GM10248 (cell line): ENCODE measurements at regions of chr6 and their contacts with region 1.

Region 1: GRCh38 chr6:19931540-19931939 is 94.4 kb downstream of the ID4 start:
- DNase-seq: no peak
- CTCF ChIP-seq: no peak

Region 2: DNA sequence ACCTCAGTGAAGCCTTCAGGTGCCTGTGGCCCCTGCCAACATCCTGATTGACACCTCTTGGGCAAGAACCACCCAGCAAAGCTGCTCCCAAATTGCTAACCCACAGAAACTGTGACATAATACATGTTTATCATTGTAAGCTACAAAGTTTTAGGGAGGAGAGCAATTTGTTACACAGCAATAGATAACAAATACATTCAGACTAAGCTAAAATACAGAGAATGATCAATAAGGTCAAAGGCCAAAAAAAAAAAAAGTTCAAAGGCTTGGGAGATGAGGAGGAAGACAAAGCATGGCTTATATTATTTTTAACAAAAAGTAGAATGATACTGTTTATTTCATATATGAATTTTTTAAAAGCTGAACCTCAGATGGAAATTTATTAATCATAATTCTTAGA is 11.5 kb after region 1 on chr6:
- CTCF ChIA-PET with region 1: interaction called, 10 read pairs
- POLR2A ChIA-PET with region 1: no interaction called
- DNase-seq: no peak
- CTCF ChIP-seq: no peak